ENCODE measurements at regions of chr9 and their contacts with region 1.

Region 1: DNA sequence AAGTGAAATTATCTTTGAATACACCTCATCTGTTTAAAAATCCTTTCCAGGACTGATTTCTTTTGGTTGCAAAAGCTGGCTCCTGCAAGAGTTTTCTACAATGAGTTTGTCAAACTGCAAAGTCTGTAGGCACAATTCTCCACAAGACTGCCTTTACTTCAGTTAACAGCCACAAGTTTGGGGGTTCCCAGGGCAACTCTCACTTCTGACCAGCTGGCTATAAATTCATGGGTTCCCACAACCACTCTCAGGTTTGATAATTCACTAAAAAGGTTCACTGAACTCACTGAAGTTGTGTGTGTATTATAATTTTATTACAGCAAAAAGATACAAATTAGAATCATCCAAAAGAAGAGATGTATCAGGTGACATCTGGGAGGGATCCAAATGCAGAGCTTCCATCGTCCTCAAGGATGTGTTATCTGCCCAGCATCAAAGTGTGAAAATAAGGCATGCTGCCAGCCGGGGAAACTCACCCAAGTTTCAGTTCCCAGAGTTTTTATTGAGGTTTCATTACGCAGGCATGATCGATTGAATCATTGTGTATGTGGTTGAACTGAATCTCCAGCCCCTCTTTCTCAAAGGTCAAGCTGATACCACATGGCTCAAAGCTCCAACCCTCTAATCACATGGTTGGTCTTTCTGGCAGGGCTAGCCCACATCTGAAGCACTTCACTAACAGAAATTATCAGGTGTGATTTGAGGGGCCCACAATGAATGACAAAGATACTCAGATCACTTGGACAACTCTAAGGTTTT is 19.0 kb upstream of the PSIP1 start:
- DNase-seq: no peak
- H3K4me3 ChIP-seq: no peak overlapping the region
- H3K27ac ChIP-seq: no peak overlapping the region
- H3K4me1 ChIP-seq: peaks cover 9% of the 10 kb centered on the region
- H3K27me3 ChIP-seq: no peaks in the 10 kb centered on the region
- CTCF ChIP-seq: no peak
- POLR2A ChIP-seq: no peak

Region 2: GRCh38 chr9:15501179-15501578 is 28.6 kb before region 1 on chr9:
- CTCF ChIA-PET with region 1: interaction called, 18 read pairs
- POLR2A ChIA-PET with region 1: no interaction called
- dilution Hi-C with region 1: no loop called
- intact Hi-C with region 1: loop called (anchors 1 kb)
- DNase-seq: peak; percentile 72
- H3K4me3 ChIP-seq: no peak overlapping the region
- H3K27ac ChIP-seq: no peak overlapping the region
- H3K4me1 ChIP-seq: peaks cover 7% of the 10 kb centered on the region
- H3K27me3 ChIP-seq: no peaks in the 10 kb centered on the region
- CTCF ChIP-seq: no peak
- POLR2A ChIP-seq: no peak

Region 3: DNA sequence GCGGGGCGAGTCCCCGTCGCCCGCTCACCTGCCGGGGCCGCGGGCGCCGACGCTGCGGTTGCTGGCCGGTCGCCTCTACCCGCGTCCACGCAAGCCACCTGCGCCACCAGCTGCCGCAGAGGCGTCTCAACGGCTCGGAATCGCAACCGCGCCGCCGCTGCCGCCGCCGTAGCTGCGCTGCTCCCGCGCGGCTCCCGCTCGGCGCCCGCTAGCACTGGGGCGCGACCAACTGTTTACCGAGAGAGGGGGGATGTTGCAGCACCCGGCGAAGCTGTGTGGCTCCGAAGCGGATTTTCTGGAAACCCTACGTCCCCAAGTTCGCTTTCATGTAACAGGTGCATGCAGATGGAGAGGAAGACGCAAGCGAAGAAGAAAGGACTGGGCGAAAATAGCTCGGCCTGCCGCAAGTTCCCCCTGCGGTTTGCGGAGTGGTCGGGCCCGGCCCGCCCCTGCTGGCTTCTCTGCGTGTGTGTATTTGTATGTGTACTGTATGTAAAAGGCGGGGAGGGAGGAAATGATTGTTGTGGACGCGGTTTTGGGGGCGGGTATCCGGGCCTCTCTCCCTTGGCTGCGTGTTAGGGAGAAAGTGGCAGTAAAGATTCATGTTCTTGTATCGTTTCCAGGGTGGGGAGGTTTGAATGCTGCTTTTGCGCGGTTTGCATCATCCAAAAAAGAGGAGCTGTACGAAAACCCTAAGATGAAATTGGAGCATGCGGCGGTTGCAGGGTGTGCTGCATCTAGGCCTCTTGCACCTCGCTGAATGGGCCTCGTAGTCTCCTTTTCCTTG is 18.8 kb before region 1 on chr9 and contains the start of gene PSIP1:
- CTCF ChIA-PET with region 1: interaction called, 7 read pairs
- POLR2A ChIA-PET with region 1: no interaction called
- dilution Hi-C with region 1: no loop called
- intact Hi-C with region 1: loop called (anchors 2 kb)
- DNase-seq: peak; percentile 87
- H3K4me3 ChIP-seq: peak within 1 kb of the TSS; percentile 76 to 91 (median 77)
- H3K27ac ChIP-seq: peak within 1 kb of the TSS; percentile 99
- H3K4me1 ChIP-seq: peaks cover 19% of the 10 kb centered on the region
- H3K27me3 ChIP-seq: no peaks in the 10 kb centered on the region
- CTCF ChIP-seq: no peak
- POLR2A ChIP-seq: peak; percentile 78
- total RNA-seq, gene PSIP1: 69.5 and 76.7 TPM in 2 replicates